ENCODE measurements at regions of chr15 and their contacts with region 1.

Region 1: DNA sequence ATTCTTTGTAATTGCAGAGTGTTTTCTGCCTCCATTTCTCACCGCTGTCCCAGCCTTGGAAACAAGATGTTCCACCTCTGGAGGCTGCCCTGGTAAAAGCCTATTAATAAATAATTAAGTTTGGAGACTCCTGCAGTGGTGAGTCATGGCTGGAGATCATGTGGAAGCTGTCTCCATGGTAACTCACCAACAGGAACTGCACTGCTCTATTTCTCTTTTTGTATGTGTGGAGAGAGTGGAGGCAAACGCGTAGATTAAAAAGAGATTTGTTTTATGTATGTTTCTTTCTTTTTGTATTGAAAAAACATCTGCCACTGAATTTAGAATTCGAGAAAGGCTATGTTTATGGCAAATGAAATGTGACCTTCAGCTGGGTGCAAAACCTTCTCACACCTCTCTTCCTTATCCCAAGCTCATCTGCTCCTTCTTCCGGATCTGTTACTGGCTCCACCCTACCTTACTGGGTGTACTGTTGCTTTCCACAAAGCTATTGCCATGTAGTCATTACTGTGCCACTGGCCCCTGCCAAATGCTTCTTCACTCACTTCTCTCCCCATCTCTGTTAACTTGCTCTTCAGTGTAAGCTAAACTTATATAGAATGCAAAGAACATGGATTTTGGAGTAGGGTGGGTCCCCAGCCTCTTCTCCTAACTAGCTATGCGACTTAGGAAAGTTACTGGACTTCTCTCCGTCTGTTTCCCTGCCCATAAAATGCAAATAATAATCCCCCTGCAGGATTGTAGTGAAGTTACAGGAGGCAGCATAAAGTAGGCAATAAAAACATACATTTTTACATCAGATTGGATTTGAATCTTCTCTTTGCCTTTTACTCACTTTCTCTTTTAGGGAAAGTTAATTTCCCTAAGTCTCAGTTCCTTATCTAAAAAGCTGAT is 778.5 kb downstream of the NTRK3 start:
- DNase-seq: peak; percentile 10 to 71
- H3K4me3 ChIP-seq: peak overlapping the region; percentile 20 to 28
- H3K27ac ChIP-seq: no peak overlapping the region
- H3K4me1 ChIP-seq: peaks cover 0 to 6% of the 10 kb centered on the region in 2 donors
- H3K27me3 ChIP-seq: no peaks in the 10 kb centered on the region
- CTCF ChIP-seq: no peak

Region 2: DNA sequence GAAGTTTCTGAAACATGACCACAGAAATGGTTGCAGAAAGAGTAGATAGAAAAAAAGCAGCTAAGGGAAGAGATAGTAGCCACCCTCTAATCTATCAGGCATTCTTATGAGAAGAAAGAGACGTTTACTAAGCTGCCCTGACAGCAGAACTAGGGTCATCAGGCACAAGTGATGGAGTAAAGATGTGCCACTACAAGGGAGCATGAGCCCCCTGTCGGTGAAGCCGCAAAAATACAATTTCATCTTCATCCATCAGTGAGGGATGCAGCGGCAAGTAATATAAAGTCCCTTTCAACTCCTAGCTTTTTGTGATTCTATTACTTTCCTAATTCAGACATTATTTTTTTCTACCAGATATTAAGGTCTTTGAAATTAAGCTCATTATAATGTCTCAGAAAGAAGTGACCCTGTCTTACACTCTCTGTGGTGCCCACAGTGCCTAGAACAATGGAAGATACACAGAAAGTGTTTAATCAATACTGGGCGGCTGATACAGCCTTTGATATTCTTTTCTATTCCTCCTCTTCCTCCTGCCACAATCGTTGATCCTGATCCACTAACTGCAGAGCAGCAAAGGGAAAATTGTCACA is 126.9 kb after region 1 on chr15:
- intact Hi-C with region 1: loop called (anchors 5 kb)
- DNase-seq: no peak
- H3K4me3 ChIP-seq: no peak overlapping the region
- H3K27ac ChIP-seq: no peak overlapping the region
- H3K4me1 ChIP-seq: peaks cover under 1 to 9% of the 10 kb centered on the region in 2 donors
- H3K27me3 ChIP-seq: no peaks in the 10 kb centered on the region
- CTCF ChIP-seq: peak in 2 of 3 experiments; percentile 22 to 24

Region 3: DNA sequence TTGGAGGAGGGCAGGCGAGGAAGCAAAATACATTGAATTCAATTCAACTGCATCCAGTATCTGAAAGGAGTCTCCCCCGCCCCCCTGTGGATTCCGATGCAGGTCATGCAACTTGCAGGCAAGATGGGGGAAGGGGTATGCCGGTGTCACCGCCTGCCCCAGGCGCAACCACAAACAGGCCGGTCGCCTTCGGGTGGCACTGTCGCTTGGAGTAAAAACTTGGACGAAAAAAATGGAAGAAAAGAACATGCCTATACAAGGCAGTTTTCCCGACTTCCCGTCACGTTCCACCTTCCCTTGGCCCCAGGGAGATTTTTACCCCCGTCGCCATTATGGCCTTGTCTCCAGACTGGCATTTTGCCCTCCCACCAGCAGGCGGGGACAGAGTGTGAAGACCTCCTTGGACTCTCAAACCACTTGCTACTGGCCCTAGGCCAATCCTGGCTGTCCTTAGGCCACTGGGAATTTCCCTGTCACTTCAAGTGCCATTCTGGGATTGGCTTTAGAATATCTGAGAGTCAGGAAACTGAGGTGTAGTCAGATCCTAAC is 780.1 kb after region 1 on chr15:
- intact Hi-C with region 1: loop called (anchors 10 kb)
- DNase-seq: peak in 1 of 2 donors; percentile 90
- H3K4me3 ChIP-seq: peak overlapping the region; percentile 76 to 79
- H3K27ac ChIP-seq: peak overlapping the region; percentile 83 to 86
- H3K4me1 ChIP-seq: peaks cover 4 to 12% of the 10 kb centered on the region in 2 donors
- H3K27me3 ChIP-seq: no peaks in the 10 kb centered on the region
- CTCF ChIP-seq: peak in 2 of 3 experiments; percentile 41 to 60